GM10248 (cell line): ENCODE measurements at regions of chr7 and their contacts with region 1.

Region 1: GRCh38 chr7:49001610-49002033 is 77.3 kb downstream of the CDC14C start:
- DNase-seq: peak; percentile 41
- CTCF ChIP-seq: peak; percentile 52

Region 2: DNA sequence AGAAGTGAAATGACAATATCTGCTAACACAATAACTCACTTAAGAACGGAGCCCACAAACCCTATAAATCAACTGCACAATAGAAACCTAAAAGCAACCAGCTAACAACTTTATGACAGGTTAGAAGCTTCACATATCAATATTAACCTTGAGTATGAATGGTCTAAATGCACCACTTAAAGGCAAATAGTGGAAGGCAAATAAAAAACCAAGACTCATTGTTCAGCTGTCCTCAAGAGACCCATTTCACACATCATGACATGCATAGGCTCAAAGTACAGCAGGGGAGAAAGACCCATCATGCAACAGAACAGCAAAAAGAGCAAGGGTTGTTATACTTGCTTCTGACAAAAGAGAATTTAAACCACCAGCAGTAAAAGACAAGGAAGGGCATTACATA is 30.4 kb before region 1 on chr7:
- CTCF ChIA-PET with region 1: interaction called, 10 read pairs
- POLR2A ChIA-PET with region 1: no interaction called
- DNase-seq: no peak
- CTCF ChIP-seq: no peak

Region 3: GRCh38 chr7:49791088-49791741 is 789.6 kb after region 1 on chr7:
- CTCF ChIA-PET with region 1: interaction called, 11 read pairs
- POLR2A ChIA-PET with region 1: no interaction called
- DNase-seq: peak; percentile 55
- CTCF ChIP-seq: peak; percentile 65